ENCODE measurements at regions of chr5 and their contacts with region 1.

Region 1: GRCh38 chr5:61408476-61409168 is 76.6 kb downstream of the ZSWIM6 start:
- DNase-seq: peak; percentile 94 to 100 (median 98)
- ATAC-seq: peak; percentile 97
- H3K4me3 ChIP-seq: peak overlapping the region; percentile 2 to 30
- H3K4me3 Mint-ChIP-seq: peak overlapping the region; percentile 73
- H3K27ac ChIP-seq: peak overlapping the region in 1 of 2 experiments; percentile 53
- H3K27ac Mint-ChIP-seq: peak overlapping the region; percentile 64
- H3K4me1 ChIP-seq: peaks cover 16% of the 10 kb centered on the region
- H3K4me1 Mint-ChIP-seq: peaks cover 30% of the 10 kb centered on the region
- H3K27me3 ChIP-seq: no peaks in the 10 kb centered on the region
- H3K27me3 Mint-ChIP-seq: no peaks in the 10 kb centered on the region
- CTCF ChIP-seq: no peak

Region 2: GRCh38 chr5:61162010-61162831 is 246.4 kb before region 1 on chr5 and contains the start of gene SMIM15:
- CTCF ChIA-PET with region 1: no interaction called
- POLR2A ChIA-PET with region 1: no interaction called
- intact Hi-C with region 1: loop called (anchors 1 to 5 kb)
- DNase-seq: peak; percentile 57 to 88 (median 79)
- ATAC-seq: peak; percentile 88
- H3K4me3 ChIP-seq: peak within 1 kb of the TSS; percentile 86 to 90
- H3K4me3 Mint-ChIP-seq: peak within 1 kb of the TSS; percentile 95
- H3K27ac ChIP-seq: peak within 1 kb of the TSS; percentile 70 to 79
- H3K27ac Mint-ChIP-seq: peak within 1 kb of the TSS; percentile 96
- H3K4me1 ChIP-seq: peaks cover 18% of the 10 kb centered on the region
- H3K4me1 Mint-ChIP-seq: peaks cover 50% of the 10 kb centered on the region
- H3K27me3 ChIP-seq: no peaks in the 10 kb centered on the region
- H3K27me3 Mint-ChIP-seq: no peaks in the 10 kb centered on the region
- CTCF ChIP-seq: no peak
- total RNA-seq, gene SMIM15: 22.6 to 24.8 TPM

Region 3: GRCh38 chr5:62256161-62257019 is 847.8 kb after region 1 on chr5:
- CTCF ChIA-PET with region 1: no interaction called
- POLR2A ChIA-PET with region 1: no interaction called
- intact Hi-C with region 1: no loop called
- DNase-seq: peak in 7 of 9 experiments; percentile 2 to 73 (median 30)
- ATAC-seq: peak; percentile 80
- H3K4me3 ChIP-seq: peak overlapping the region; percentile 12 to 25
- H3K4me3 Mint-ChIP-seq: peak overlapping the region; percentile 66
- H3K27ac ChIP-seq: peak overlapping the region; percentile 60 to 83
- H3K27ac Mint-ChIP-seq: peak overlapping the region; percentile 98
- H3K4me1 ChIP-seq: peaks cover 57% of the 10 kb centered on the region
- H3K4me1 Mint-ChIP-seq: peaks cover 79% of the 10 kb centered on the region
- H3K27me3 ChIP-seq: no peaks in the 10 kb centered on the region
- H3K27me3 Mint-ChIP-seq: no peaks in the 10 kb centered on the region
- CTCF ChIP-seq: no peak

Region 4: GRCh38 chr5:62412537-62413329 is 1004.1 kb after region 1 on chr5 and contains the start of gene IPO11:
- CTCF ChIA-PET with region 1: no interaction called
- POLR2A ChIA-PET with region 1: no interaction called
- intact Hi-C with region 1: loop called in 1 of 2 experiments (anchors 5 kb)
- DNase-seq: peak; percentile 97 to 100 (median 99)
- ATAC-seq: peak; percentile 96
- H3K4me3 ChIP-seq: peak within 1 kb of the TSS; percentile 78 to 98
- H3K4me3 Mint-ChIP-seq: peak within 1 kb of the TSS; percentile 88
- H3K27ac ChIP-seq: peak within 1 kb of the TSS; percentile 80 to 84
- H3K27ac Mint-ChIP-seq: peak within 1 kb of the TSS; percentile 88
- H3K4me1 ChIP-seq: peaks cover 14% of the 10 kb centered on the region
- H3K4me1 Mint-ChIP-seq: peaks cover 30% of the 10 kb centered on the region
- H3K27me3 ChIP-seq: no peaks in the 10 kb centered on the region
- H3K27me3 Mint-ChIP-seq: no peaks in the 10 kb centered on the region
- CTCF ChIP-seq: no peak
- total RNA-seq, gene IPO11: 17.0 to 17.2 TPM

Measured in CD8-positive, alpha-beta T cell (primary cell).